PC-9 (cell line): ENCODE measurements at regions of chr22 and their contacts with region 1.

Region 1: GRCh38 chr22:28817919-28818909 is 17.8 kb upstream of the XBP1 start:
- DNase-seq: peak; percentile 63 to 94
- H3K4me3 ChIP-seq: peak overlapping the region; percentile 15; the same call in 1 of the 2 replicates
- H3K27ac ChIP-seq: peak overlapping the region; percentile 93
- H3K4me1 ChIP-seq: peaks cover 65% of the 10 kb centered on the region
- H3K27me3 ChIP-seq: no peaks in the 10 kb centered on the region
- CTCF ChIP-seq: no peak

Region 2: GRCh38 chr22:28800308-28801077 is 17.7 kb before region 1 on chr22 and contains the start of gene XBP1:
- CTCF ChIA-PET with region 1: no interaction called
- POLR2A ChIA-PET with region 1: interaction called, 20 read pairs
- intact Hi-C with region 1: loop called (anchors 2 kb)
- DNase-seq: peak; percentile 85
- H3K4me3 ChIP-seq: peak within 1 kb of the TSS; percentile 99
- H3K27ac ChIP-seq: peak within 1 kb of the TSS; percentile 99
- H3K4me1 ChIP-seq: peaks cover 39% of the 10 kb centered on the region
- H3K27me3 ChIP-seq: no peaks in the 10 kb centered on the region
- CTCF ChIP-seq: no peak
- total RNA-seq, gene XBP1: 35.2 and 47.7 TPM in 2 replicates